ENCODE measurements at regions of chr15 and their contacts with region 1.

Region 1: GRCh38 chr15:58393241-58393662 is 38.5 kb upstream of the LIPC start:
- DNase-seq: no peak
- ATAC-seq: no peak
- H3K4me3 Mint-ChIP-seq: no peak overlapping the region
- H3K27ac Mint-ChIP-seq: no peak overlapping the region
- H3K4me1 Mint-ChIP-seq: no peaks in the 10 kb centered on the region
- H3K27me3 Mint-ChIP-seq: peaks cover 8% of the 10 kb centered on the region
- CTCF ChIP-seq: no peak

Region 2: DNA sequence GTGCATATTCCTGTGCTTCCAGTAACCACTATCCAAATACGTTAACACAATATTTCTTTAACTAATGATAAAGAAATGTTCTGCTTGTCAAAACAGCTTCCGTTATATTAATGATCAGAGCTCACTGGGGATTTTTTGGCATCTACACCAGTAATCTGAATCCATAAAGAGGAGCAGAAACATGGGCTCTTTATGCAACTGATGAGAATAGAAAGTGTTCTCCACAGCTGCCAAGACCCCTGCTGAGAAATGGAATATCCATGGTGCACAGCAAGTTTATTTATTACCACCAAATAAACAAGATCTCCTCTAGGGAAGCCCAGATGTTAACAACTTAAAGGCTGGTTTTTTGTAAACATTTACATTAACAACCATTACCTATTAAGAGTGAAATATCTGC is 382.3 kb before region 1 on chr15:
- CTCF ChIA-PET with region 1: no interaction called
- POLR2A ChIA-PET with region 1: no interaction called
- intact Hi-C with region 1: loop called (anchors 5 kb)
- DNase-seq: no peak
- ATAC-seq: no peak
- H3K4me3 Mint-ChIP-seq: no peak overlapping the region
- H3K27ac Mint-ChIP-seq: no peak overlapping the region
- H3K4me1 Mint-ChIP-seq: no peaks in the 10 kb centered on the region
- H3K27me3 Mint-ChIP-seq: peaks cover 22% of the 10 kb centered on the region
- CTCF ChIP-seq: no peak

Region 3: DNA sequence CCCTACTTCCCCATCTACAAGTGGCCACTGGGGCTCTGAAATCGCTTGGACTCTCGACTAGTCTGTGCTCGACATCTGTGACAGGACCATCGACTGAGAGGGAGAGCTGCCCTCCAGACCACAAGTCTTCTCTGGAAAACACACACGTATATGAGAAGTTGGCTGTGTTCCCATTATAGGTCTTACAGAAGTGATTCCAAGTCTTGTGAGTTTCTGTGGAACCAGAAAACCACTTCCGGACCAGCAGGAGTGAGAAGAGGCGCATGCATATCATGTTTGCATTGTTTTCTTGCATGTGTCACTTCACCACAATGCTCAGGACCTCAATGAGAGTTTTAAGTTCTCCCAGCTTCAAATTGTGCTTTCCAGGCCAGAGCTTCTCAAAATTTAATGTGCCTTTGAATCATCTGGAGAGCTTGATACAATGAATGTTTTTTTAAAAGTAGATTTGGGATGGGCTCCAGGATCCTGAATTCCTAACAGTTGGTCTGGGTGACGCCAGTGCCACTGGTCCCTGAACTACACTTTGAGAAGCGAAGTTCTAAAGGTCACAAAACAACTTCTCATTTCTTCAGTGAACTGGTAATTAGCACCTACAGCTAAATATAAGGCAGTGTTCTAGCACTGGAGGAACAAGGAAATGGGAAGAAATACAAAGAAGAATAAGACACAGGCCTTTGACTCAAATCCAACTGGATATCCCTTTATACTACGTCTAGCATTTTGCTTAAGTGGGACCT is 54.2 kb after region 1 on chr15:
- CTCF ChIA-PET with region 1: no interaction called
- POLR2A ChIA-PET with region 1: no interaction called
- intact Hi-C with region 1: no loop called
- DNase-seq: no peak
- ATAC-seq: no peak
- H3K4me3 Mint-ChIP-seq: no peak overlapping the region
- H3K27ac Mint-ChIP-seq: no peak overlapping the region
- H3K4me1 Mint-ChIP-seq: no peaks in the 10 kb centered on the region
- H3K27me3 Mint-ChIP-seq: no peaks in the 10 kb centered on the region
- CTCF ChIP-seq: no peak

Region 4: DNA sequence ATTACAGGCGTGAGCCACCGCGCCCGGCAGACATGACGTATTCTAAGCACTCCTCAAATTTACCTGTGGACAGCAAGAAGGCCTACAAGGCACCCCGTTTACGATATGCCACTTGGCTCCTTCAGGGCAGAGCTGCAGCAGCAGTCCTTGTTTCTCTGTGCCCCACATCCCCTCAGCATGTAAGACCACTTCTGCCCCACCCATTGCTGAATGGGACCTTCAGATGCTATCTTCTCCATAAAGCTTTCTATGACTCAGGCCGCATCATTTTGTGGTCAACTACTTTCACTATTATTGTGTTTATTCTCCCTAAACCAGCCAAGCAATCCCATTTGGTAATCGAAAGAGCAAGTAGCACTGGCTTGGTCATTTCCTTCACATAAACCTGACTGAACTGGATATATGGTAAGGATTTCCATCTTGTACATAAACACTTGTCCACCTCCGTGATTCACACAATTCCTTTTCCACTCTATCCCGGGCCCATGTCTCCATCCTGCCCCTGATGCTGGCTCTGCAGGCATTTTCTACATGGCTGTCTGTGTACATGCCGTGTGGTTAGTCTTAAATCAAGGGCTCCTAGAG is 64.2 kb after region 1 on chr15:
- CTCF ChIA-PET with region 1: no interaction called
- POLR2A ChIA-PET with region 1: no interaction called
- intact Hi-C with region 1: no loop called
- DNase-seq: no peak
- ATAC-seq: no peak
- H3K4me3 Mint-ChIP-seq: no peak overlapping the region
- H3K27ac Mint-ChIP-seq: no peak overlapping the region
- H3K4me1 Mint-ChIP-seq: peaks cover 1% of the 10 kb centered on the region
- H3K27me3 Mint-ChIP-seq: peaks cover 13% of the 10 kb centered on the region
- CTCF ChIP-seq: no peak

Region 5: DNA sequence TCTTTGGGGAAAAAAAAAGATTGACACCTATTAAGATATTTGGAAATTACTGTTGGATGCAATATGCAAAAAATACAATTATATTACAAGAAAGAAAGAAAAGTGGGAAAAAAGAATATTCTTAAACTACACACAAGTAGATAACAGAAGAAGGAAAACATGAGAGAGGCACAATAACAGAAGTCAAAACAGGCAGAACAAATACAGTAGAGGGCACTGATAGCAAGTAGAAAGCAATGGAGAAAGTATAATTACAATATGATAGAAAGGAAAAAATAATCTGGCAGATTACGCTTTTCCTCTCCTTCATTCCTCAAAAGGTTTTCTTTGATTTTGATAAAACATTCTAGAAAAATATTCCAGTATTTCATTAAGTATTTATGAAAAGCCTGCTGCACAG is 284.2 kb after region 1 on chr15:
- CTCF ChIA-PET with region 1: no interaction called
- POLR2A ChIA-PET with region 1: no interaction called
- intact Hi-C with region 1: no loop called
- DNase-seq: no peak
- ATAC-seq: no peak
- H3K4me3 Mint-ChIP-seq: no peak overlapping the region
- H3K27ac Mint-ChIP-seq: no peak overlapping the region
- H3K4me1 Mint-ChIP-seq: no peaks in the 10 kb centered on the region
- H3K27me3 Mint-ChIP-seq: no peaks in the 10 kb centered on the region
- CTCF ChIP-seq: no peak

Measured in activated B cell treated with CpG ODN at 0.5 μM for 24 hours (primary cell).